ENCODE measurements at regions of chr12 and their contacts with region 1.

Region 1: DNA sequence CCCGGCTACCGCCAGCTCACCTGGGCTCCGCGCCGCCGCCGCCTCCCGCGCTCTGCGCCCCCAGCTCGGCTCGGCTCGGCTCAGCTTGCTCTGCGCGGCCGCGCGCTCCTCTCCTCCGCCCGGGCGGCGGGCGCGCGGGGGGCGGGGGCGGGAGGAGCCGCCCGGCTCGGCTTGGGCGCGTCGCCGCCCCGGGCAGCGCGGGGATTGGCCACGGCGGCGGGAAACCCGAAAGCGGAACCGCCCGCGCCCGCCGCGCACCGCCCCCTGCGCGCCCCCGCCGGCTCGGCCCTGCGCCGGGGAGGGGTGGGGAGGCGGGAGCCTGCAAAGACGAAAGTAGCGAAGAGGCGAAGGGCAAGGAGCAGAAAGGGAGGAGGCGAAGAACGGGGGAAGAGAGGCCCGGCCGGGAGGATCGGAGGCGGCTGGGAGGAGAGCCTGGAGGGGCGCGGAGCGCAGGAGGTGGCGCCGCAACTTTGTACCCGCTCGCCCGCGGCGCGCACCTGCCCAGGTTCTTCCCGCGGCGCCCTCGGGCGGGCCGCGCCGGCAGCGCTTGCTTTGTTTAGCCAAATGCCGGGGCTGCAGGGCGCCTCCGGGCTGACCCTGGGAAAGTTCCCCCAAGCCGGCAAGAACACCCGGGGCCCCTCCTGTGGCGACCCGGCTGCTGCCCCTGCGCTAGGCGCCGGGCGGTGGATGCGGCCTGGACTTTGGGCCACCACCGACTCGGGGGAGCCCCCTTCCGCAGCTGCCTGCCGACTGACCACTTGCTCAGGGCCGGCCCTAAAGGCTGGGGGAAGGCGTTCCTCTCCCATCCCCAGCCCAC is at the start of gene CAMKK2:
- DNase-seq: peak; percentile 98
- ATAC-seq: peak; percentile 87
- H3K4me3 Mint-ChIP-seq: peak within 1 kb of the TSS; percentile 91
- H3K27ac Mint-ChIP-seq: peak within 1 kb of the TSS; percentile 85
- H3K4me1 Mint-ChIP-seq: peaks cover 18% of the 10 kb centered on the region
- H3K27me3 Mint-ChIP-seq: peaks cover 2% of the 10 kb centered on the region
- total RNA-seq, gene CAMKK2: 27.0 to 29.2 TPM

Region 2: GRCh38 chr12:121110211-121110940 is 186.4 kb before region 1 on chr12:
- POLR2A ChIA-PET with region 1: no interaction called
- DNase-seq: peak; percentile 53
- ATAC-seq: peak; percentile 78
- H3K4me3 Mint-ChIP-seq: no peak overlapping the region
- H3K27ac Mint-ChIP-seq: peak overlapping the region; percentile 7
- H3K4me1 Mint-ChIP-seq: peaks cover 9% of the 10 kb centered on the region
- H3K27me3 Mint-ChIP-seq: no peaks in the 10 kb centered on the region

Region 3: GRCh38 chr12:121209624-121210572 is 86.9 kb before region 1 on chr12 and contains the start of gene P2RX4:
- POLR2A ChIA-PET with region 1: no interaction called
- DNase-seq: peak; percentile 92
- ATAC-seq: peak; percentile 89
- H3K4me3 Mint-ChIP-seq: peak within 1 kb of the TSS; percentile 96
- H3K27ac Mint-ChIP-seq: peak within 1 kb of the TSS; percentile 96
- H3K4me1 Mint-ChIP-seq: peaks cover 22% of the 10 kb centered on the region
- H3K27me3 Mint-ChIP-seq: no peaks in the 10 kb centered on the region
- total RNA-seq, gene P2RX4: 50.7 to 52.9 TPM

Region 4: GRCh38 chr12:121223292-121224285 is 73.2 kb before region 1 on chr12:
- POLR2A ChIA-PET with region 1: interaction called, 10 read pairs
- DNase-seq: peak; percentile 71
- ATAC-seq: peak; percentile 68
- H3K4me3 Mint-ChIP-seq: peak overlapping the region; percentile 69
- H3K27ac Mint-ChIP-seq: peak overlapping the region; percentile 95
- H3K4me1 Mint-ChIP-seq: peaks cover 38% of the 10 kb centered on the region
- H3K27me3 Mint-ChIP-seq: no peaks in the 10 kb centered on the region

Region 5: DNA sequence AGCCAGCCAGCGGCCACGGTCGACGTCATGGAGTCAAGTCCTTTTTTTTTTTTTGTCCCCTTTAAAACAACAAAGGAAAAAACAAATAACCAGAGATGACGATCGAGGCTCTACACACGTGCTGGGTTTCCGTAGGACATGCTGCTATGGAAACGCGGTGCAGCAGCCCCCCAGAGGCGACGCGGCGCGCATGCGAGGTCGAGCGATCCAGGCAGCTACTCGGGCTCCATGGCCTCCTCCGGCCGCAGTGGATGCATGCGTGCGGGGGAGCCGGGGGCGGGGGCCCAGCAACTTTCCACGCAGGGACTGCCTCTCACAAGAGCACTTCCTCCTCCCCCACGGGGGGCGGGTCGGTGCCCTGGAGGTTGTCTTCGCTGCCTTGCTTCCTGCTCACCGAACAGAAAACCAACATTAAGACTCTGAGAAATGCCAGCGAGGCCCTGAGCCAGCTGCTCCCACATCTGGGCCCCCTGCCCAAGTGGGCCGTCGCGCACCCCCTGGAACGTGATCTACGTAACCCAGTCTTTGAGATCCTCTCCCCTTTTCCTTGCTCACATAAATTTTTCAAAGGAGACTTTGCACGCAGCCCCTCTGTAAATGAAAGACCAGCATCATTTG is 56.2 kb before region 1 on chr12:
- POLR2A ChIA-PET with region 1: interaction called, 16 read pairs
- DNase-seq: peak; percentile 86
- ATAC-seq: peak; percentile 87
- H3K4me3 Mint-ChIP-seq: peak overlapping the region; percentile 70
- H3K27ac Mint-ChIP-seq: peak overlapping the region; percentile 89
- H3K4me1 Mint-ChIP-seq: peaks cover 37% of the 10 kb centered on the region
- H3K27me3 Mint-ChIP-seq: no peaks in the 10 kb centered on the region

Region 6: DNA sequence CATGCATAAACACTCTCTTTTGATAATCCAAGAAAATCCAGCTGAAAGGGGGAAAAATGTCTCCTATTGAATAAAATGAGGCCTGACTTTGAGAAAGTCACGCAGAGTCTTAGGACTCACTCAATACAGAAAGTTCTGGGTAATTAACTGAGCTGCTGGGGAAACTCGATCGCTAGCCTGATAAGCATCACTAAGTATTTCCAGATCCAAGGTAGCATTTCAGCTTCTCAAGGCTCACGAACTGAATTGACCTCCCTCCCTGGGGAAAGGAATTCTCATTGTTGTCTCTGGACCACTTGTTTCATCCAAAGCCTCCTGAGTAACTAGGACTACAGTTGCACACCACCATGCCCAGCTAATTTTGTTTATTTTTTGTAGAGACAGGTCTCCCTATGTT is 69.2 kb after region 1 on chr12:
- POLR2A ChIA-PET with region 1: no interaction called
- DNase-seq: no peak
- ATAC-seq: no peak
- H3K4me3 Mint-ChIP-seq: no peak overlapping the region
- H3K27ac Mint-ChIP-seq: no peak overlapping the region
- H3K4me1 Mint-ChIP-seq: peaks cover 10% of the 10 kb centered on the region
- H3K27me3 Mint-ChIP-seq: peaks cover 38% of the 10 kb centered on the region

Region 7: DNA sequence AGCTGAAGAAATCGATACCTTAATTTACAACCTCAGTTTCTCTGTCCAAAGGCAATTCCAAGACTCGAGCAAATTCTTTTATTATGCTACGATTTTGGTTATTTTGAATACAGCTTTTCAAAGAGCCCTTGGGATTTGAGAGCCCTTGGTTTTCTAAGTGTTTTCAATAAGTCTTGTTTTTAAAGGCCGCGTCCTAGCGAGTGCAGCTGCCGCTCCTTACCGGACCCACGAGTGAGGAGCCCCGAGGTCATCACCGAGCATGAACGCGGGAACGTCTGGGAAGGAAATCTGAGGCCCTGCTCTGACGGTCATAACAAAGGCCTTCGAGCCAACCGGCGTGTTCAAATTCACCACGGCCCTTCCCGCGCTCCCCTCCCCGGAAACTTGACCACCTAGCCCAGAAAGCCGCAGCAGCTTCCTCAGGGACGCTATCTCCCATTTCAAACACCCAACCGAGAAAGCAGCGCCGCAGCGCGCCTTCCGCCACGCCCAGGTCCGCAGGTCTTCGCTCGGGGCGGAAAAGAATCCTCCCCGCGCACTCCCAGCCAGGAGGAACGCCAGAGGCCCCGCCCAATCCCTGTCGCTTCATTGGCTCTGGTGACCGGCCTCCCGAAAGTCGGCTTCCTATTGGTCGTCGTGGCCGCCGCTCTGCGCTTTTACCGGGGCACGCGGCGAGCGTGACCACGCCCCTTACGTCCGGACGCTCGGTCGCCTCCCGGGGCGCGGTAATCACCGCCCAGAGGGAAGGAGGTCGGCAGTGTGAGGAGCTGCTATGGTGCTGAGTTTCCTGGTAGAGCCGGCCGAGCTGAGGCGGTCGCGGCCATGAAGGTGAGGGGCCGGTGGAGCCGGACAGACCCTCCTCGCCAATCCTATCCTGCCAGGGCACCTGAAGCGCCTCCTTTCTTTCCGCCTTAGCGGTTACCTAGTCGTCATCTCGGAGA is 102.8 kb after region 1 on chr12 and contains the start of gene RNF34:
- POLR2A ChIA-PET with region 1: interaction called, 11 read pairs
- DNase-seq: peak; percentile 95
- ATAC-seq: peak; percentile 91
- H3K4me3 Mint-ChIP-seq: peak within 1 kb of the TSS; percentile 95
- H3K27ac Mint-ChIP-seq: peak within 1 kb of the TSS; percentile 98
- H3K4me1 Mint-ChIP-seq: peaks cover 25% of the 10 kb centered on the region
- H3K27me3 Mint-ChIP-seq: no peaks in the 10 kb centered on the region
- total RNA-seq, gene RNF34: 81.9 to 84.5 TPM